ENCODE measurements at regions of chr1 and their contacts with region 1.

Region 1: GRCh38 chr1:229862017-229862774 is 204.8 kb upstream of the GALNT2 start:
- DNase-seq: no peak
- ATAC-seq: no peak
- H3K4me3 ChIP-seq: no peak overlapping the region
- H3K27ac ChIP-seq: peak overlapping the region; percentile 86 to 96 (median 93)
- H3K4me1 ChIP-seq: peaks cover 43% of the 10 kb centered on the region in 2 donors
- H3K27me3 ChIP-seq: no peaks in the 10 kb centered on the region
- CTCF ChIP-seq: no peak
- POLR2A ChIP-seq: no peak

Region 2: GRCh38 chr1:229887043-229887822 is 25.0 kb after region 1 on chr1:
- in situ Hi-C with region 1: no loop called
- intact Hi-C with region 1: loop called (anchors 1 kb)
- DNase-seq: peak; percentile 78 to 88
- ATAC-seq: peak; percentile 84 to 86
- H3K4me3 ChIP-seq: no peak overlapping the region
- H3K27ac ChIP-seq: peak overlapping the region; percentile 84 to 97 (median 95)
- H3K4me1 ChIP-seq: peaks cover 42 to 55% of the 10 kb centered on the region in 2 donors
- H3K27me3 ChIP-seq: no peaks in the 10 kb centered on the region
- CTCF ChIP-seq: no peak
- POLR2A ChIP-seq: no peak

Region 3: DNA sequence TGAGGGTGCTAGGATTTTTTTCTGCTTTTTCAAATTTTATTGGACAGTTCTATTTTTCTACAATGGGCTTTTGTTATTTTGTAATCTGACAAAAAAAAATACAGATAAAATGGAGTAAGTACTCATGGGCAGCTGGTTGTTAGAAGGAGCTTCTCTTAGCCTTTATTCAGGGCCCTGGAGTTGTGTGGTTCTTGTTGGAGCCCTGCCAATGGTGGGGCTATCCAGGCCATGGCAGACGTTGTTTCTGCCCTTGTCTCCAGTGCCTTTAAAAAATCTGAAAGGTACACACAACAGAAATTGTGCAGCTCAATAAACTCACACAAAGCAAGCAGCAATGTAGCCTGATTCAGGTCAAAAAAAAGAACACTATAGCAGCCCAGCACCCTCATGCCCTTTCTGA is 51.3 kb after region 1 on chr1:
- in situ Hi-C with region 1: no loop called
- intact Hi-C with region 1: no loop called
- DNase-seq: no peak
- ATAC-seq: no peak
- H3K4me3 ChIP-seq: no peak overlapping the region
- H3K27ac ChIP-seq: no peak overlapping the region
- H3K4me1 ChIP-seq: no peaks in the 10 kb centered on the region
- H3K27me3 ChIP-seq: no peaks in the 10 kb centered on the region
- CTCF ChIP-seq: no peak
- POLR2A ChIP-seq: no peak

Measured in gastrocnemius medialis (tissue), 4 donors.